ENCODE measurements at regions of chr21 and their contacts with region 1.

Region 1: DNA sequence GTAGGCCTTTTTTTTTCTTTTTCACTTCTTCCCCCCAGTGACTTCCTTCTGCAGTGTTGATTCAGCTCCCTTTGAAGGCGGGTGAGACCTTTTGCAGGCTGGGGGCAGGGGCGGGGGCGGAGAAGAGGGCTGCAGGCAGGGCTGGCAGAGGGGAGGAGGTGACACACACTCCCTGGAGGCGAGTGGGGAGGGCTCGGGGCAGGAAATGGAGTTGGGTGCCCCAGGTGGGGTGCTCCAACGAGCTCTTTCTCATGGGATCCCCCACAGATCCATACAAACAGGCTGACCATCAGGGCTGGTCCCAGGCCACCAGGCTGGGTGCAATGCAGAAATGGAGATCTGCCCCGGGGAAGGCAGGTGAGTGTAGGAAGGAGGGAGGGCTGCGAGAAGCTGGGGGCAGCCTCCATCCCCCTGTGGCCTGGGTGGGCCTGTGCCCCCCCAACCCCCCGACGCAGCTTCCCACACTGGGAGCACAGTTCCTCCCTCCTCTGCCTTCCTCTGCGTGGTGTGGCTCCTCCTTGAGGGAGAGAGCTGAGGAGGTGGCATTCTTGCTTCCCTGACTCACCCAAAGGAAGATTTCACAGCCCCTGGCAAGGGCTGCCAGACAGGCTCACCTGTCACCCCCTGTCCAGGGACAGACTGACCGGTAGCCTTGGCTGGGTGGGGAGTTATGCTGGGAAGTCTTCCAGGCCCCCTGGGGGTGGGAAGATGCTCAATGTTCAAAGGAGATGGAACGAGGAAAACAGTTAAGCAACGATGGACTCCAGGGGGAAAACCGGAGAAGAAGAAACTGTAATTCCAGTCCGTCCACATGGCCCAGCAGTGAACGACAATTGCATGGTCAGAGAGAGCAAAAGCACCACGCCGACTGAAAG is 7.1 kb upstream of the ITGB2 start:
- DNase-seq: peak; percentile 87
- ATAC-seq: peak; percentile 72
- H3K4me3 ChIP-seq: peak overlapping the region; percentile 59
- H3K27ac ChIP-seq: peak overlapping the region; percentile 91
- H3K4me1 ChIP-seq: peaks cover 43% of the 10 kb centered on the region
- H3K27me3 ChIP-seq: no peaks in the 10 kb centered on the region
- CTCF ChIP-seq: peak in 1 of 3 experiments; percentile 8; a peak in 1 of 6 replicates
- EP300 ChIP-seq: peak; percentile 73 to 79; a peak in 3 of 4 replicates
- POLR2A ChIP-seq: peak; percentile 51
- RAD21 ChIP-seq: 0 out of 2 replicates have a peak, but pooled peaks have one; percentile 25

Region 2: DNA sequence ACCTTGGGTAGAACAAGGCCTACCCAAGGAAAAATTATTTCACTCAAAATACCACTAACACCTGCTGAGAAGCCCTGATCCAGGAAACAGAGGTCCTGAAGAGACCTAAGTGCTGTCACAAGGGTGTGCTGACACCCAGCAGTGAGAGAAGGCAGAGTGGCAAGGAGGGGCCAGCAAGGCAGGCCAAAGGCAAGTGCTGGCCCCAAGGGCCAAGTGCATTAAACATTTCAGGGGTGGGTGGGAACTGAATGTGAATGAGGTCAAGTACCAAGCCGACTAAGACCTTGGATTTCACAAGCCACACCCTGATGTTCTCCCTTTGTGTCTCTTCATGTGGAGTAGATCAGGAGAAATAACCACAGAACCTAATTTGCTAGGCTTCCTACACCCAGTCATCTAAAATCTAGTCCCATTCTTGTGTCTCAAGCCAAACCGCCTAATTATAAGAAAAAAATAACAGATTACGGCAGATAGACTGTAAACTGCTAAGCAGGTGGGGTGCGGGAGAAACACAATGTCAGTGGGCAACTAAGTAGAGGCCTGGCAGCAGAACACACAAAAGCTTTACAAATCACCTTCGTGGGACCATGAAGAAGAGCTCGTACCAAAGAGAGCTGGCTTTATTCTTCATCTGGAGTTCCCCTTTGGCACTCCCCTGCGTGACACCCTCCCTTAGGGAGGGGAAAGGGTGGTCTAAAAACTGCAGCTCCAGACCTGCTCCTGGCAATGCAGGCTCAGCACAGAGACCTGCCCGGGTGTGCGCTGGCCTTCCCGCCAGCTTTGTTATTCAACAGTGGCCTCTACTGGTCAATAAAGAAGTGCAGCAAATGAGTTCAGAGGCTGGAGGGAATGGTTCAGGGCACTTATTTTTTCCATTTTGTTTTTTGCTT is 134.9 kb before region 1 on chr21:
- CTCF ChIA-PET with region 1: interaction called, 44 read pairs
- POLR2A ChIA-PET with region 1: interaction called, 4 read pairs
- RAD21 ChIA-PET with region 1: interaction called, 4 read pairs
- SMC1A ChIA-PET with region 1: interaction called, 6 read pairs
- in situ Hi-C with region 1: no loop called
- intact Hi-C with region 1: no loop called
- DNase-seq: no peak
- ATAC-seq: peak; percentile 94
- H3K4me3 ChIP-seq: no peak overlapping the region; the same call in 1 of the 2 replicates
- H3K27ac ChIP-seq: peak overlapping the region; percentile 30; the same call in 1 of the 2 replicates
- H3K4me1 ChIP-seq: peaks cover 19% of the 10 kb centered on the region
- H3K27me3 ChIP-seq: no peaks in the 10 kb centered on the region
- CTCF ChIP-seq: peak; percentile 66 to 77 (median 68)
- EP300 ChIP-seq: no peak
- POLR2A ChIP-seq: no peak
- RAD21 ChIP-seq: peak; percentile 82

Region 3: DNA sequence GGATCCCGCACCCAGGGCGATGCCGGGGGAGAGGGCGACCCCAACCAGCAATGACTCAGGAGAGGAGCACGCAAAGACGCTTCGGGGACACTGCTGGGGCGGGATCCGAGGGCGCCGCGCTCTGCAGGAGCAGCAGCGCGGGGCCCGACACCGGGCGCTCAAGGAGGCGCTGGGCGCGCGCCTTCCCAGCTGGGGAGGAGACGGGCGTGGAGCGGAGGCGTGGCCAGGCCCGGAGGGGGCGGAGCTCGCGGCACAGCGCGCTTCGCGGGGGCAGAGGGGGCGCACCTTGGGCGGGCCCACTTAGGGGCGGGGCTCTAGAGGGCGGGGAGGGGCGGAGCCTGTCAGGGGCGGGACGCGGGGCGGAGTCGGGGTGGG is 110.3 kb before region 1 on chr21:
- CTCF ChIA-PET with region 1: interaction called, 3 read pairs
- POLR2A ChIA-PET with region 1: interaction called, 3 read pairs
- RAD21 ChIA-PET with region 1: interaction called, 8 read pairs
- SMC1A ChIA-PET with region 1: interaction called, 4 read pairs
- in situ Hi-C with region 1: no loop called
- intact Hi-C with region 1: loop called (anchors 5 kb)
- DNase-seq: no peak
- ATAC-seq: peak; percentile 91
- H3K4me3 ChIP-seq: peak overlapping the region; percentile 90
- H3K27ac ChIP-seq: peak overlapping the region; percentile 81
- H3K4me1 ChIP-seq: no peaks in the 10 kb centered on the region
- H3K27me3 ChIP-seq: no peaks in the 10 kb centered on the region
- CTCF ChIP-seq: no peak
- EP300 ChIP-seq: no peak
- POLR2A ChIP-seq: no peak
- RAD21 ChIP-seq: 0 out of 2 replicates have a peak, but pooled peaks have one; percentile 1

Region 4: DNA sequence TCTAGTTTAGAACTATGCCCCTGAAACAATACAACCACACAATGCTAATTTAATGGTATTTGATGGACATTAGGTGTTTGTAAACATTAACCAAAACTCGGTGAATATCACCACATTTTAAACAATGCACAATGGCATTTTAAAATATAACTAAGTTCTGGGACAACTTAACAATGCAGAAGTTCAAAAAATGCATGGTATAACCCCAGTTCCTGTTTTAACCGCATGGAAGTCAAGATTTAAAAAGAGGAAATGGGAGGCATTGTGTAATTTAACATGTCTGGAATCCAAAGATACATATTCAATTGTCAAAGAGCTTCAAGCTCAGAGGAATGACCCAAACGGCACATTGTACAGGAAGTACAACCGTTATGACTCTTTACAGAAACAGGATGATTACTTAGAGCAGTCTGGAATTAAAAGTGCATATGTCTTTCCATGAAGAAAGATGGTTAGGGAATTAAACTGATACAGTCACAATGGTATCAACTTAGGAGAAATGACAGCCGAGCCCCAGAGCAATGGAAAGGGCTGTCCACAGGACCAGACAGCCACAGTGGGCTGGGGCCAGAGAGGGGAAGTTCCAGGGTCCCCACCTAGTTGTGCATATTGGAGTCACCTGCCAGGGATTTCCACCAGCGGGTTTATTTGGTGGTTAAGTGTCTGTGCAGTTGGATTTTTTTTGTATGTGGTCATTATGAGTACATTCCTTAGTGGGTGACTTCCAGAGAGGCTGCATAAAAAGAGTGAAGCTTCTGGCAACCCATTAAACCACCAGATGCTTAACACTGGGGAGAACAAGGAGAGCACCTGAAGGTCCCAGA is 46.9 kb before region 1 on chr21:
- CTCF ChIA-PET with region 1: interaction called, 11 read pairs
- POLR2A ChIA-PET with region 1: interaction called, 28 read pairs
- RAD21 ChIA-PET with region 1: interaction called, 28 read pairs
- SMC1A ChIA-PET with region 1: interaction called, 31 read pairs
- in situ Hi-C with region 1: loop called (anchors 10 kb)
- intact Hi-C with region 1: no loop called
- DNase-seq: no peak
- ATAC-seq: peak; percentile 73
- H3K4me3 ChIP-seq: no peak overlapping the region
- H3K27ac ChIP-seq: peak overlapping the region; percentile 25
- H3K4me1 ChIP-seq: peaks cover 36% of the 10 kb centered on the region
- H3K27me3 ChIP-seq: no peaks in the 10 kb centered on the region
- CTCF ChIP-seq: no peak
- EP300 ChIP-seq: peak in 1 of 2 experiments; percentile 57; a peak in 1 of 4 replicates
- POLR2A ChIP-seq: no peak
- RAD21 ChIP-seq: no peak

Region 5: DNA sequence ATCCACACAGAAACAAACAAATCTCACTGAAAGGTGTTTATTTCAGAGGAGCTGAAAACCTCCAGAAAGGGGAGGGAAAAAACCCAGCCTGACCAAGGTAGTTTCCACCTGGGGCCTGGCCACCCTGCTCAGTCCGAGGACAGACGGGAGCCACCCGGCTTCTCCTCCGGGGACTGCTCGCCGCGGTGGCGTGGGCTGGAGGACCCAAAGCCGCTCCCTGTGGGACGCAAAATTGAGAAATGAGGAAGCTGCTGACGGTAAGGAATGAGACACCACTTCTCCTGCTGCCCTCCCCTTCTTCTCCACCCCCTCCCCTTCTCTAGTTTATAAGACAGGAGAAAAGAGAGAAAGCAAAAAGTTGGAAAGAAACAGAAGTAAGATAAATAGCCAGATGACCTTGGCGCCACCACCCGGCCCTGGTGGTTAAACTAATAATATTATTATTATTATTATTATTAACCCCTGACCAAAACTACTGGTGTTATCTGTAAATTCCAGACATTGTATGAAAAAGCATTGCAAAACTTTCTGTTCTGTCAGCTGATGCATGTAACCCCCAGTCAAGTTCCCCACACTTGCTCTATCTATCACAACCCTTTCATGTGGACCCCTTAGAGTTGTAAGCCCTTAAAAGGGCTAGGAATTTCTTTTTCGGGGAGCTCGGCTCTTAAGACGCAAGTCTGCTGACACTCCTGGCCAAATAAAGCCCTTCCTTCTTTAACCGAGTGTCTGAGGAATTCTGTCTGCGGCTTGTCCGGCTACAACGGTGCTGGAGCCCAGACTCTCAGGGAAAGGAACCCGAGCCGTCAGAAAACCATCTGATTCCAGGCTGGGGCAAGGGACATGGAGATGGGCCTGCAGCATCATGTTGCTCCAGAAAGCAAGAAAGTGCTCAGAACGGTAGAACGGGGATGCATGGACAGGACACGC is 19.6 kb before region 1 on chr21:
- CTCF ChIA-PET with region 1: interaction called, 11 read pairs
- POLR2A ChIA-PET with region 1: interaction called, 19 read pairs
- RAD21 ChIA-PET with region 1: interaction called, 20 read pairs
- SMC1A ChIA-PET with region 1: interaction called, 10 read pairs
- in situ Hi-C with region 1: no loop called
- intact Hi-C with region 1: no loop called
- DNase-seq: no peak
- ATAC-seq: peak; percentile 86
- H3K4me3 ChIP-seq: no peak overlapping the region
- H3K27ac ChIP-seq: peak overlapping the region; percentile 38; the same call in 1 of the 2 replicates
- H3K4me1 ChIP-seq: peaks cover 22% of the 10 kb centered on the region
- H3K27me3 ChIP-seq: no peaks in the 10 kb centered on the region
- CTCF ChIP-seq: no peak
- EP300 ChIP-seq: no peak
- POLR2A ChIP-seq: no peak
- RAD21 ChIP-seq: no peak

Region 6: DNA sequence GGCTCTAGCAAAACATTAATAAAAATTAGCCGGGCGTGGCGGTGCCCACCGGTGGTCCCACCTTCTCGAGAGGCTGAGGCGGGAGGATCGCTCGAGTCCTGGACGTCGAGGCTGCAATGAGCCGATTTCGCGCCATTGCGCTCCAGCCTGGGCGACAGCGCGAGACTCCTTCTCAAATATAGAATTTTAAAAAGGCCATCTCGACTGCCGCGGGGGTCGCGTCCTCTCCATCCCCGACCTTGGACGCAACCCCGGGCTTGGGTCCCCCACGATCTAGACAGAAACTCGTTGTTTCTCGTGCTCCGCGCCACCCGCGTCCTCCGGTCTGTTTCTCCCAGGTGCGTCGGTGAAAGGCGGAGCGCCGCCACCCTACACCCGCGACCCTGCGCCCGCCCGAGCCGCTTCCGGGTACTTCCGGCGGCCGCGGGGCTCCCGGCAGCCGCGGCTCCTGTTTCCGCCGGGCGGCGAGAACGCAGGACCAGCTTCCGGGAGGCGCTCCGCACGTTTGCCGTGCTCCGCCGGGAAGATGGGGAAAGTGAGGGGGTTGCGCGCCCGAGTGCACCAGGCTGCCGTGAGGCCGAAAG is 11.8 kb after region 1 on chr21 and contains the start of gene SLX9:
- CTCF ChIA-PET with region 1: interaction called, 5 read pairs
- POLR2A ChIA-PET with region 1: interaction called, 9 read pairs
- RAD21 ChIA-PET with region 1: interaction called, 14 read pairs
- SMC1A ChIA-PET with region 1: no interaction called
- in situ Hi-C with region 1: no loop called
- intact Hi-C with region 1: no loop called
- DNase-seq: no peak
- ATAC-seq: peak; percentile 92
- H3K4me3 ChIP-seq: peak within 1 kb of the TSS; percentile 92
- H3K27ac ChIP-seq: peak within 1 kb of the TSS; percentile 50
- H3K4me1 ChIP-seq: peaks cover 18% of the 10 kb centered on the region
- H3K27me3 ChIP-seq: no peaks in the 10 kb centered on the region
- CTCF ChIP-seq: no peak
- EP300 ChIP-seq: no peak
- POLR2A ChIP-seq: peak; percentile 88
- RAD21 ChIP-seq: no peak
- polyA plus RNA-seq, gene SLX9: 0.69 to 5.5 TPM

Region 7: DNA sequence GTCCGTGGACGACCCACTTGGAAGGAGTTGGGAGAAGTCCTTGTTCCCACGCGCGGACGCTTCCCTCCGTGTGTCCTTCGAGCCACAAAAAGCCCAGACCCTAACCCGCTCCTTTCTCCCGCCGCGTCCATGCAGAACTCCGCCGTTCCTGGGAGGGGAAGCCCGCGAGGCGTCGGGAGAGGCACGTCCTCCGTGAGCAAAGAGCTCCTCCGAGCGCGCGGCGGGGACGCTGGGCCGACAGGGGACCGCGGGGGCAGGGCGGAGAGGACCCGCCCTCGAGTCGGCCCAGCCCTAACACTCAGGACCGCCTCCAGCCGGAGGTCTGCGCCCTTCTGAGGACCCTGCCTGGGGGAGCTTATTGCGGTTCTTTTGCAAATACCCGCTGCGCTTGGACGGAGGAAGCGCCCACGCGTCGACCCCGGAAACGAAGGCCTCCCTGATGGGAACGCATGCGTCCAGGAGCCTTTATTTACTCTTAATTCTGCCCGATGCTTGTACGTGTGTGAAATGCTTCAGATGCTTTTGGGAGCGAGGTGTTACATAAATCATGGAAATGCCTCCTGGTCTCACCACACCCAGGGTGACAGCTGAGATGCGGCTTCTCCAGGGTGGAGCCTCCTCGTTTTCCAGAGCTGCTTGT is 1740.0 kb after region 1 on chr21:
- CTCF ChIA-PET with region 1: no interaction called
- POLR2A ChIA-PET with region 1: no interaction called
- RAD21 ChIA-PET with region 1: no interaction called
- SMC1A ChIA-PET with region 1: no interaction called
- in situ Hi-C with region 1: no loop called
- intact Hi-C with region 1: no loop called
- DNase-seq: no peak
- ATAC-seq: peak; percentile 76
- H3K4me3 ChIP-seq: peak overlapping the region; percentile 69
- H3K27ac ChIP-seq: no peak overlapping the region
- H3K4me1 ChIP-seq: no peaks in the 10 kb centered on the region
- H3K27me3 ChIP-seq: no peaks in the 10 kb centered on the region
- CTCF ChIP-seq: no peak
- EP300 ChIP-seq: no peak
- POLR2A ChIP-seq: no peak
- RAD21 ChIP-seq: no peak

Measured in GM12878 (cell line).